ENCODE measurements at regions of chr1 and their contacts with region 1.

Region 1: DNA sequence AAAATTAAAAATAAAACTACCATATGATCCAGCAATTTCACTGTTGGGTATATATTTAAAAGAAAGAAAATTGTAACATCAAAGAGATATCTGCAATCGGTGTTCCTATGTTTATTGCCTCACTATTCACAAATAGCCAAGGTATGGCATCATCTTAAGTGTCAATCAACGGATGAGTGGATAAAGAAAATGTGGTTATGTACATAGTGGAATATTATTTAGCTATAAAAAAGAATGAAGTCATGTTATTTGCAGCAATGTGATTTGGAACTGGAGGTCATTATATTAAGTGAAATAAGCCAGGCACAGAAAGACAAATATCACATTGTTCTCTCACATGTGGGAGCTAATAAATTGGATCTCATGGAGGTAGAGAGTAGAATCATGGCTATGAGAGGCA is 76.3 kb downstream of the RD3 start:
- DNase-seq: no peak
- H3K4me3 ChIP-seq: no peak overlapping the region
- H3K4me3 Mint-ChIP-seq: peak overlapping the region; percentile 49 to 83 (median 78)
- H3K27ac ChIP-seq: peak overlapping the region; percentile 20
- H3K27ac Mint-ChIP-seq: peak overlapping the region; percentile 24 to 86 (median 54)
- H3K4me1 ChIP-seq: peaks cover 7% of the 10 kb centered on the region
- H3K4me1 Mint-ChIP-seq: peaks cover 9 to 13% (median 12%) of the 10 kb centered on the region in 4 donors
- H3K27me3 ChIP-seq: no peaks in the 10 kb centered on the region
- H3K27me3 Mint-ChIP-seq: no peaks in the 10 kb centered on the region

Region 2: DNA sequence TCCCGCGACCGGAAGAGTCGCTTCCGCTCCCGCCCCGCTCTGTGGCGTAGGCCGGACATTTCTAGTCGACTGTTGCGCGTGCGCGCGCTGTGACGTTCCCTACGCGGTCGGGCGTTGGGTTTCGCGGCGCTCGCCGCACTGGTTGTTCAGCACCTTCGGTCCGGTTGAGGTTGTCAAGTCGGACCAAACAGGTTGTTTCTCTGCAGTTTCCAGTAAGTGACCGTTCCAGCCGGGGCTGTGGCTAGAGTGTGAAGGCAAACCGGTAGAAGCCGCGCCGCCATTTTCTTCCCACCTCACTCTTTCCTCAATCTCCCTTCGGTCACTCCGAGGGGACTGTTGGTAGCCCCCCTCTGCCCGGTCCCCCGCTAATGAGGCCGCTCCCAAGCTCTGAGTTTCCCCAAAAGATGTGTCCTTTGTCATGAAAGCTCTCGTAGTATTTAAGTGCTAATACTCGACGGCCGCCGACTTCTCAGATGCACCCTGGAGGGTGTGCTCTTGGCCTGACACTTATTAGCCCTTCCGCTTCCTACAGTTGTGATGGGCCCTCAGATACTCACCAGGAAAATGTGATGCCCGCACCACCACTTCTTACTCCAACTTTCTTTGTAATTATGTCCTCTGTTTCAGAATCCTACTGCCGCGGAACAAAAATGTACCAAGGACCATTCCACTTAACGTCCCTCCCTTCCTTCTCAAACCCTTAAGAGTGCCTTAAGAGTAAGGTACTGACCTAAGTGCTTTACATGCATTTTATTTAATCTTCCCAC is 32.8 kb before region 1 on chr1:
- CTCF ChIA-PET with region 1: no interaction called
- POLR2A ChIA-PET with region 1: interaction called, 5 read pairs
- intact Hi-C with region 1: loop called (anchors 2 kb)
- DNase-seq: peak; percentile 63 to 75 (median 64)
- H3K4me3 ChIP-seq: peak overlapping the region; percentile 75 to 84
- H3K4me3 Mint-ChIP-seq: peak overlapping the region; percentile 93 to 97 (median 96)
- H3K27ac ChIP-seq: peak overlapping the region; percentile 82
- H3K27ac Mint-ChIP-seq: peak overlapping the region; percentile 93 to 98 (median 97)
- H3K4me1 ChIP-seq: peaks cover 16% of the 10 kb centered on the region
- H3K4me1 Mint-ChIP-seq: peaks cover 16 to 35% (median 28%) of the 10 kb centered on the region in 4 donors
- H3K27me3 ChIP-seq: no peaks in the 10 kb centered on the region
- H3K27me3 Mint-ChIP-seq: no peaks in the 10 kb centered on the region

Region 3: DNA sequence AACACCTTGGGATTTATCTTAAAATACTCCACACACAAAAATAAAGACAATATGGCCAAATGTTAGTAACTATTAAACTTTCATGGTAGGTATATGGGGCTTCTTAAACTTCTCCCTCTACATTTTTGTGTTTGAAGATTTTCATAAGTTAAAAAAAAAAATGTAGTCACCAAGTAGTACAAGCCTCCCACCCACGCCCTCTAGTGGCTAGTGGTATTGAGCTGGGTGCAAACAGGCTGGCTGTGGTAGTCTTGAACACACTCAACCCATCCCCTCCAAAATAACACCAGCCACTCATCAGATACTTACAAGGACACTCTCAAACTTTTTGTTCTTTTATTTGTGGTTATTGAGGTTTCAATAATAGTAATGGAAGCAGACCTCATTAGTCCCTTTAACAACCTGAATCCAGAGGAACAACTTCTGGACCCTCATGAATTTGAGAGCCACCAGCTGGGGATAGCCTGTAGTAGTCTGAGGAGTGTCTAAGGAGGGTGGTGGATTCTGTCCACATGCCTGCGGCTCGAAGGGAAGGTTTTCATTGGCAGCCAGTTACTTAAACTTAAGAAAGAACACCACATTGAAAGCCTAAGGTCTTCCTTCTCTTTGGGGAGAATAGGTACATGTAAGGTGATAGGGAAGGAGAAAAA is 60.6 kb after region 1 on chr1:
- CTCF ChIA-PET with region 1: no interaction called
- POLR2A ChIA-PET with region 1: no interaction called
- intact Hi-C with region 1: loop called (anchors 2 kb)
- DNase-seq: peak; percentile 69 to 73 (median 71)
- H3K4me3 ChIP-seq: no peak overlapping the region
- H3K4me3 Mint-ChIP-seq: no peak overlapping the region
- H3K27ac ChIP-seq: no peak overlapping the region
- H3K27ac Mint-ChIP-seq: no peak overlapping the region
- H3K4me1 ChIP-seq: no peaks in the 10 kb centered on the region
- H3K4me1 Mint-ChIP-seq: peaks cover 3 to 6% (median 4%) of the 10 kb centered on the region in 4 donors
- H3K27me3 ChIP-seq: peaks cover 10% of the 10 kb centered on the region
- H3K27me3 Mint-ChIP-seq: peaks cover 14 to 25% of the 10 kb centered on the region in 2 donors

Measured in CD4-positive, alpha-beta memory T cell (primary cell).